Heart right ventricle (tissue), 16 donors: ENCODE measurements at regions of chr1 and their contacts with region 1.

Region 1: GRCh38 chr1:85484264-85484663 is 19.3 kb upstream of the DDAH1 start:
- DNase-seq: no peak
- ATAC-seq: no peak
- H3K4me3 ChIP-seq: no peak overlapping the region
- H3K27ac ChIP-seq: no peak overlapping the region
- H3K4me1 ChIP-seq: no peaks in the 10 kb centered on the region
- H3K27me3 ChIP-seq: no peaks in the 10 kb centered on the region
- CTCF ChIP-seq: no peak

Region 2: GRCh38 chr1:85413169-85413568 is 71.1 kb before region 1 on chr1:
- intact Hi-C with region 1: loop called in 1 of 10 experiments (anchors 10 kb)
- DNase-seq: no peak
- ATAC-seq: peak in 1 of 8 donors; percentile 37
- H3K4me3 ChIP-seq: no peak overlapping the region
- H3K27ac ChIP-seq: peak overlapping the region in 2 of 10 donors; percentile 11 to 24
- H3K4me1 ChIP-seq: peaks cover 0 to 7% (median 0%) of the 10 kb centered on the region in 9 donors
- H3K27me3 ChIP-seq: no peaks in the 10 kb centered on the region
- CTCF ChIP-seq: no peak

Region 3: DNA sequence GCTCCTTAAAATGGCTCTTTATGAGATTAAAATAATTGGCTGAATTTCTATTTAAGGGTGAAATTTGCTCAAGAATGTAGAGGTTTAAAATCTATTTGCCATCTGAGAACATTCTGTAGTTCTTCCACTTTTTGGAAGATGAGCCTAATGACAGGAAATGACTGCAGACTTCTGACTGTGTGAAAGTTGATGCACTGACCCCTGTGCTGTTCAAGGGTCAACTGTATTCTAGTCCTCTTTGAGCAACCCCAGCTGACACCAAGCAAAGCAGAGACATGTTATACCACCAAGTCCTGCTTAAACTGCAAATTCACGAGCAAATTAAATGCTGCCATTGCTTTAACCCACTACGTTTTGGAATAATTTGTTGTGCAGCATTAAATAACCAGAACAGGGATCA is 45.9 kb before region 1 on chr1:
- intact Hi-C with region 1: no loop called
- DNase-seq: peak in 1 of 2 donors; percentile 22
- ATAC-seq: peak in 5 of 8 donors; percentile 50 to 73 (median 58)
- H3K4me3 ChIP-seq: no peak overlapping the region
- H3K27ac ChIP-seq: peak overlapping the region in 1 of 10 donors; percentile 28
- H3K4me1 ChIP-seq: peaks cover 0 to 34% (median 11%) of the 10 kb centered on the region in 9 donors
- H3K27me3 ChIP-seq: no peaks in the 10 kb centered on the region
- CTCF ChIP-seq: no peak

Region 4: DNA sequence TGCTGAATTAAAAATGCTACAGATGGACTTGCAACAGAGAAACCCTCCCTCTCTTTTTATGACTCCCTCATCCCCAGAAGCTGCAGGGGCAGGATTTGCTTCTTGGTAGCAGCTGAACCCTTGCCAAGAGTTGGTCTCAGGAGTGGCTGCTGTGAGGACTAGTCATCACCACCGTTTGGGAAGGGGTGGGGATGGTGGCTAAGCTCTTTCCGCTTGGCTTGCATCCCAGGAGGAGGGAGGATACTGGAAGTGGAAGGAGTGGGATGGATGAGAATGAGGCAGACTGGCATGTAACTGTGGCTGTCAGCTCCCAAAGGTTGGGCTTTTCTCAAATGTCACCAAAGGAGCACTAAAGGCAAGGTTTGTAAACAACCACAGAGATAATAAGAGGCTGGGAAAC is 723.1 kb after region 1 on chr1:
- intact Hi-C with region 1: no loop called
- DNase-seq: peak; percentile 8 to 18
- ATAC-seq: peak in 3 of 8 donors; percentile 55 to 67 (median 58)
- H3K4me3 ChIP-seq: no peak overlapping the region
- H3K27ac ChIP-seq: peak overlapping the region in 1 of 10 donors; percentile 48
- H3K4me1 ChIP-seq: peaks cover 0 to 9% (median 0%) of the 10 kb centered on the region in 9 donors
- H3K27me3 ChIP-seq: no peaks in the 10 kb centered on the region
- CTCF ChIP-seq: no peak